CD8-positive, alpha-beta T cell (primary cell): ENCODE measurements at regions of chr1 and their contacts with region 1.

Region 1: DNA sequence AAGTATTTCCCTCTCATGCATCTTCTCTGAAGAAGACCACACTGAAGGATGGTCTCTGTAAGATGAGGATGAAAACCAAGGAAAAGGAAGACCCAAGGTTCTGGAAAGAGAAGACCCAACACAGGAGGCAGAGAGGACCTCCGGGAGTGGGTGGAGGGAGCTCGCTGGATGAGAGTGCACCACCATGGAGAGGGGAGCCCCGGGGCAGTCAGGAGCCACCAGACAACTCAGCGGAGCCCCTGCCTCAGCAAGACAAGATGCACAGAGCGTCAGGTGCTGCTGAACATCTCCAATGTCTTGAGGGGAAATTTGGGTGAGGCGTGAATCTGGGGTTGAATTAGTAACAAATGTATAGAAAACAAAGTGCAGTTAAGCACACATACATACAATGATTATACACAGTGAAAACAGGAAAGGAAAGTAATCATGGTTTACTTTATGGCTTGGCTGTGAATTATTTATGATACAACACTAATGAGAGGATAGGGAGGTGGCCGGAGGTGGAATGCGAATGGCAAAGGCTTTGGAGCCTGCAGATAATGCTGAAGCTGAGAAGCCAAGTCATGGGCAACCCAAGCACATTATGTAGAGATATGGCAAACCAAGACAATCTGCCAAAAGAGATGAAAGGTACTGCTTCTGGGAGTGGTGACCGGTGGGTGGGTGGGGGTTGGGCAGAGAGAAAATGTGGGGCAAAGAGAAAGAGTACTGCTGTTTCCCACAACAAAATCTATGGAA is 80.4 kb upstream of the EDN2 start:
- DNase-seq: peak in 1 of 9 experiments; percentile 21
- ATAC-seq: no peak
- H3K4me3 ChIP-seq: no peak overlapping the region
- H3K4me3 Mint-ChIP-seq: no peak overlapping the region
- H3K27ac ChIP-seq: no peak overlapping the region
- H3K27ac Mint-ChIP-seq: no peak overlapping the region
- H3K4me1 ChIP-seq: no peaks in the 10 kb centered on the region
- H3K4me1 Mint-ChIP-seq: peaks cover 4% of the 10 kb centered on the region
- H3K27me3 ChIP-seq: no peaks in the 10 kb centered on the region
- H3K27me3 Mint-ChIP-seq: no peaks in the 10 kb centered on the region
- CTCF ChIP-seq: no peak

Region 2: GRCh38 chr1:41545986-41546832 is 18.7 kb before region 1 on chr1:
- CTCF ChIA-PET with region 1: no interaction called
- POLR2A ChIA-PET with region 1: no interaction called
- intact Hi-C with region 1: loop called in 1 of 2 experiments (anchors 2 kb)
- DNase-seq: no peak
- ATAC-seq: no peak
- H3K4me3 ChIP-seq: no peak overlapping the region
- H3K4me3 Mint-ChIP-seq: no peak overlapping the region
- H3K27ac ChIP-seq: no peak overlapping the region
- H3K27ac Mint-ChIP-seq: no peak overlapping the region
- H3K4me1 ChIP-seq: no peaks in the 10 kb centered on the region
- H3K4me1 Mint-ChIP-seq: peaks cover 3% of the 10 kb centered on the region
- H3K27me3 ChIP-seq: no peaks in the 10 kb centered on the region
- H3K27me3 Mint-ChIP-seq: no peaks in the 10 kb centered on the region
- CTCF ChIP-seq: no peak

Region 3: DNA sequence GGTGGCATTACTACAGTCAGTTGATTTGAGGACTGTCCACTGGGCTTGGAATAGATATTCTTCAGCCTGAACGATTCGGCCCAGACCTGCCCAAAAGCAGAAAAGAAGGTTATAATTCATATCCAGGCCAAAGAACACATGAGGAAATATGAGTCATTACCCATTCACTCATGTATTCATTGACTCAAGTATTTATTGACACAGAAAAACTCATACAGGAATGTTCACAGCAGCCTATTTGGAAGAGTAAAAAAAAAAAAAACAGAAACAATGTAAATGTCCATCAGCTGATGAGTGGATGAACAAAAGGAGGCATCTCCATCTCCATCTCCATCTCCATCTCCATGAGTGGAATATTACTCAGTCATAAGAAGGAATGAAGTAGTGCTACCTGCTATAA is 875.0 kb after region 1 on chr1:
- CTCF ChIA-PET with region 1: no interaction called
- POLR2A ChIA-PET with region 1: no interaction called
- intact Hi-C with region 1: loop called in 1 of 2 experiments (anchors 5 kb)
- DNase-seq: no peak
- ATAC-seq: no peak
- H3K4me3 ChIP-seq: no peak overlapping the region
- H3K4me3 Mint-ChIP-seq: no peak overlapping the region
- H3K27ac ChIP-seq: no peak overlapping the region
- H3K27ac Mint-ChIP-seq: no peak overlapping the region
- H3K4me1 ChIP-seq: no peaks in the 10 kb centered on the region
- H3K4me1 Mint-ChIP-seq: no peaks in the 10 kb centered on the region
- H3K27me3 ChIP-seq: no peaks in the 10 kb centered on the region
- H3K27me3 Mint-ChIP-seq: no peaks in the 10 kb centered on the region
- CTCF ChIP-seq: no peak